H1 (cell line): ENCODE measurements at regions of chr1 and their contacts with region 1.

Region 1: DNA sequence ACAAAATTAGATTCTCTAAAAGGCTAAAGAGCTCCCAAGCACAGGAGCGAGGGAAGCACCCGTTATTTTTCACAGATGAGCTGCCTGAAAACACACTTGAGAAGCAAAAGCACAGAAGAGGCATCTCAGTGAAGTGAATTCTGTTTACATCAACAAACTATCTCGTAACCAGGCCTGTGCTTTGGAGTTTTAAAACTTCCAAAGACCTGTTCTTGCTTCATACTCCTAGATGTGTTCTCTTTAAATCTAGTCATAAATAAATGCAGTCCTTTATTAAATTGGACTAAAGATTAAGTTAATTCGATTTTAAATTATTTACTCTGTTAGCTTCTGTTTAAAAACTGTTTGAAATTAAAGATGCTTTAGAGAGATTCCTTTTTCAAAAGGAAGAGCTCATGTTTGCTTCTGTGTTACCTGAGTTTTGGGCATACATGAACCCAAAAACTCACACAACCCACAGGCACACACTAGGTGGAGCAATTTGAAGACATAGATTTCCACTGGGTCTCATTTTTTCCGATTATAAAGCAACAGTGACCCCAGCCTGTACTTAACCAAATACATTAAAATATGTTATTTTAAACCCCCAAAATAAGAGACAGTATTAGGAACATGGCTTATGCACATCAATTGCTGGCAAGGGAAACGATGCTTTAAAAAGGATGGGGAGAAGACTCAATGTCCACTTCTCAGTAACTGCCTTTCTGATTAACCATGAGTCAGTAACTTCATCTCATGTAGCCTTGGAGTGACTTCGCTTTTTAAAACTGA is 648.2 kb downstream of the SMYD3 start:
- DNase-seq: no peak
- H3K4me3 ChIP-seq: no peak overlapping the region
- H3K27ac ChIP-seq: no peak overlapping the region
- H3K4me1 ChIP-seq: peaks cover 0 to 4% (median 3%) of the 10 kb centered on the region in 4 experiments; a peak in 5 of 7 replicates
- H3K27me3 ChIP-seq: no peaks in the 10 kb centered on the region
- CTCF ChIP-seq: peak in 2 of 3 experiments; percentile 17 to 30; a peak in 2 of 4 replicates
- EP300 ChIP-seq: no peak
- POLR2A ChIP-seq: no peak
- RAD21 ChIP-seq: peak in 1 of 2 experiments; percentile 29; a peak in 2 of 4 replicates

Region 2: DNA sequence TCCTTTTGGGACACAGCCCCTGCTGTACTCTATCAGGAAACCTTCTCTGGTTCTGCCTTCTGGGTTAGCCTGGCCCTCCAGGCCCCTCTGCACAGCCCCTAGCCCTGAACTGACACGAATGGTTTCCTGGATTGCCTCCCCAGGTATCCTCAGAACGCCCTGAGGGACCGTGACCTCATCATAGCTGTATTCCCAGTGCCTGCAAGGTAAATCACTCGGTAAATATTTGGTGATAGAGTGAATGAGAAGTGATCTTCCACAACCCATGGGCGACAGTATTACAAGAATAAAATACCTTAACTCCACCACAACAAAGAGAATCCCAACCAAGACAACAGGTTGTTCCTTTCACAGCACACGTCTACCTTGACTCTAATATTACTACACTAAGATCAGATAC is 11.0 kb after region 1 on chr1:
- CTCF ChIA-PET with region 1: interaction called, 25 read pairs
- POLR2A ChIA-PET with region 1: interaction called, 3 read pairs
- DNase-seq: no peak
- H3K4me3 ChIP-seq: no peak overlapping the region
- H3K27ac ChIP-seq: no peak overlapping the region
- H3K4me1 ChIP-seq: no peaks in the 10 kb centered on the region
- H3K27me3 ChIP-seq: no peaks in the 10 kb centered on the region
- CTCF ChIP-seq: no peak
- EP300 ChIP-seq: no peak
- POLR2A ChIP-seq: no peak
- RAD21 ChIP-seq: no peak

Region 3: GRCh38 chr1:245874942-245875580 is 16.2 kb after region 1 on chr1:
- CTCF ChIA-PET with region 1: interaction called, 25 read pairs
- POLR2A ChIA-PET with region 1: no interaction called
- DNase-seq: no peak
- H3K4me3 ChIP-seq: no peak overlapping the region
- H3K27ac ChIP-seq: no peak overlapping the region
- H3K4me1 ChIP-seq: no peaks in the 10 kb centered on the region
- H3K27me3 ChIP-seq: no peaks in the 10 kb centered on the region
- CTCF ChIP-seq: no peak
- EP300 ChIP-seq: no peak
- POLR2A ChIP-seq: no peak
- RAD21 ChIP-seq: no peak

Region 4: DNA sequence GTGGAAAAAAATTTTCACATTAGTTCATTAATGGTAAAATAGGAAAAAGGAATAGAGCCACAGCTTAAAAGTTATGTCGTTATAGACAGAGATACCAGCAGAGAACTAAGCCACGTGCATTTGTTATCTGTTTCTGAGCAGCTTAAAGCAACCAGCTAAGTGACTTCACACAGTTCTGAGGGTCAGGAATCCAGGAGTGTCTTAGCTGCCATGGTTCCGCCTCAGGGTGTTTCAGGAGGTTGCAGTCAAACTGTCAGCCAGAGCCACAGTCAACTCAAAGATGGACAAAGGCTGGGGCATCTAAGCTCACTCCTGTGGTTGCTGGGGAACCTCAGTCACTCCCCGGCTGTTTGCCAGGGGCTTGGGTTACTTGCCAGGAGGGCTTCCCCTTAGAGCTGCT is 132.4 kb after region 1 on chr1:
- CTCF ChIA-PET with region 1: no interaction called
- POLR2A ChIA-PET with region 1: no interaction called
- DNase-seq: no peak
- H3K4me3 ChIP-seq: no peak overlapping the region
- H3K27ac ChIP-seq: no peak overlapping the region
- H3K4me1 ChIP-seq: no peaks in the 10 kb centered on the region
- H3K27me3 ChIP-seq: no peaks in the 10 kb centered on the region
- CTCF ChIP-seq: no peak
- EP300 ChIP-seq: no peak
- POLR2A ChIP-seq: no peak
- RAD21 ChIP-seq: no peak